Upper lobe of right lung (tissue), 1 donor: ENCODE measurements at regions of chr3 and their contacts with region 1.

Region 1: DNA sequence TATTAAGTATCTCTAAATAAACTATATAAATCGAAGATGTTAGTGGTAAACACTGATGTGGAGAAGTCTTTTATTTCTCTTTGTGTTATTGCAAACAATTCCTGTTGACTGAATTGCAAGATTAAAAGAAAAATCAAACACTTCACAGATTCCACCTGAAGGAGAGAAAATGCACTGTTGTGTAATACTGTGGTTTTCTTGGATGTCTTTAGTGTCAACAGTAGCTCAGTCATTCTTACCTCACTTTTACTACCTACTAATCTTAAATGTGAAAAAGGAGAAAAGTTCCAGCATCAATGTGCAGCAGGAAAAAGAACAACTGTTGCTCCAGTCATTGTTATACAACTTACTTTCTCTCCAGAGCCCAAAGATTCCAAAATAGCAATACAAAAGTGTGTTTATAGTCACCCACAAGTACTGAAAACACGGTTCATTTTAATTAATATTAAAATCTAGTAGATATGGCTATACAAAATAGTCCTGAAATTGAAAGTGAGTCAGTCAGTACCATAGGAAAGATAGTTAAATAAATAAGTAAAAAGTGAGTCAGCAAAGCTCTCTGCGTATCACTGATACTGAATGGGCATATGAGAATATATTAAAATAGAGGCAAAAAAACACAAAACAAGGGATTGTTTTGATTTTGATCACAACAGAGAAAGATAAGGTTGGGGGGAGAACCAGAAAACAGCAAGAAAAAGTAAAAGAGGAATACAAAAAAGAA is 90.5 kb upstream of the CSPG5 start:
- DNase-seq: no peak
- ATAC-seq: no peak
- H3K4me3 ChIP-seq: no peak overlapping the region
- H3K27ac ChIP-seq: no peak overlapping the region
- H3K4me1 ChIP-seq: no peaks in the 10 kb centered on the region
- H3K27me3 ChIP-seq: no peaks in the 10 kb centered on the region
- CTCF ChIP-seq: no peak

Region 2: DNA sequence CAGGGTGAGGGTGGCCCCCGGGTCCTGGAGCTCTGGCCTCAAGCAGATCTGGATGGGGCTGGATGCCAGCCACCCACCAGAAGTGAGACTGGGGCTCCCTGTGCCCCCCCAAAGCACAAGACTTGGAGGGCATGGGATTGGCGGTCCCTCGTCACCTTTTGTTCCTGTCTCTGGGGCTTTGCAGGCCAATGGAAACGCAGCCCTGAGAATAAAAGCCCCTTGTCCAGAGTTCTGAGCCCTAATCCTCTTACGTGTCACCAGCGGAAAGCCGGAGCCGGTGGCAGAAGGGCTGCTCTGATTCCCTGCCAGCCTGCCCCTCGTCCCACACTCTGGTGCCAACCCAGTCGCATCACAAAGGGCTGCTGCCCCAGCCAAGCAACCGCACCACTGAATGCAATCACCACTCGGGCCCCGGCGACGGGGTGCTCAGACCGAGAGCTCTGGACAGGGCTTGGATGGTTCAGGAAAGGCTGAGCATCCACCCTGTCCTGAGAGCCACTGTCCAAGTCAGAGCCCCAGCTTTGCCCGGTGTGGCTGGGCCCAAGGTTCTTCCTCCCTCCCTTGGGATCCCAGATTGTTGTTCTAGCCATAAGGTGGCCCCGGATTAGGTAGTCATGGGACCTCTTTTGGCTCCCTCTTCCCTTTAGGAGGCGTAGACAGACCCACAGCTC is 132.8 kb before region 1 on chr3:
- intact Hi-C with region 1: no loop called
- DNase-seq: no peak
- ATAC-seq: no peak
- H3K4me3 ChIP-seq: no peak overlapping the region
- H3K27ac ChIP-seq: no peak overlapping the region
- H3K4me1 ChIP-seq: no peaks in the 10 kb centered on the region
- H3K27me3 ChIP-seq: no peaks in the 10 kb centered on the region
- CTCF ChIP-seq: no peak

Region 3: GRCh38 chr3:47711596-47711995 is 42.4 kb after region 1 on chr3:
- intact Hi-C with region 1: loop called (anchors 5 kb)
- DNase-seq: no peak
- ATAC-seq: no peak
- H3K4me3 ChIP-seq: no peak overlapping the region
- H3K27ac ChIP-seq: no peak overlapping the region
- H3K4me1 ChIP-seq: no peaks in the 10 kb centered on the region
- H3K27me3 ChIP-seq: no peaks in the 10 kb centered on the region
- CTCF ChIP-seq: no peak